Head of caudate nucleus (tissue), 42 donors: ENCODE measurements at regions of chr15 and their contacts with region 1.

Region 1: GRCh38 chr15:47196057-47196456 is 521.2 kb upstream of the SEMA6D start:
- DNase-seq: peak; percentile 60 to 92 (median 83)

Region 2: GRCh38 chr15:47158573-47158972 is 37.5 kb before region 1 on chr15:
- intact Hi-C with region 1: no loop called
- DNase-seq: no peak

Region 3: DNA sequence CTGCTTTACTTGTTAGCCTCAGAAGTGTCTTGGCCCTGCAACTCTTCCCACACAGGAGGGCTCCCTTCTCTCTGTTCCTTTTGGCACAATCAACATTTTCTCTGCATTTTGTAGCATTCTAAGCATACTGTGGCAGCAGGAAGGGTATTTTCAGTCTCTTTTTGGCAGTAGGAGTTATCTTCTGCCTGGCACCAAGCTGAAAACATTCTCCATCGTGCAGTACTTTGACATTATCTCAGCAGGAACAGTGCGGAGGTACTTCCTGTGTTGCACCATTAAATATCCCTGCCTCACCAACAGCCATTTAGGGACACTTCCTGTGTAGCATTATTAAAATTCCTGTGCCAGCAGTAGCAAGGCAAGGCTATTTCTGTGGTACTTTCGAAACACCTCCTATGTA is 288.0 kb after region 1 on chr15:
- intact Hi-C with region 1: loop called (anchors 10 kb)
- DNase-seq: no peak

Region 4: GRCh38 chr15:47987908-47988532 is 792.0 kb after region 1 on chr15:
- intact Hi-C with region 1: loop called (anchors 5 kb)
- DNase-seq: peak in 29 of 42 donors; percentile 8 to 80 (median 49)